Calu3 (cell line): ENCODE measurements at regions of chr20 and their contacts with region 1.

Region 1: DNA sequence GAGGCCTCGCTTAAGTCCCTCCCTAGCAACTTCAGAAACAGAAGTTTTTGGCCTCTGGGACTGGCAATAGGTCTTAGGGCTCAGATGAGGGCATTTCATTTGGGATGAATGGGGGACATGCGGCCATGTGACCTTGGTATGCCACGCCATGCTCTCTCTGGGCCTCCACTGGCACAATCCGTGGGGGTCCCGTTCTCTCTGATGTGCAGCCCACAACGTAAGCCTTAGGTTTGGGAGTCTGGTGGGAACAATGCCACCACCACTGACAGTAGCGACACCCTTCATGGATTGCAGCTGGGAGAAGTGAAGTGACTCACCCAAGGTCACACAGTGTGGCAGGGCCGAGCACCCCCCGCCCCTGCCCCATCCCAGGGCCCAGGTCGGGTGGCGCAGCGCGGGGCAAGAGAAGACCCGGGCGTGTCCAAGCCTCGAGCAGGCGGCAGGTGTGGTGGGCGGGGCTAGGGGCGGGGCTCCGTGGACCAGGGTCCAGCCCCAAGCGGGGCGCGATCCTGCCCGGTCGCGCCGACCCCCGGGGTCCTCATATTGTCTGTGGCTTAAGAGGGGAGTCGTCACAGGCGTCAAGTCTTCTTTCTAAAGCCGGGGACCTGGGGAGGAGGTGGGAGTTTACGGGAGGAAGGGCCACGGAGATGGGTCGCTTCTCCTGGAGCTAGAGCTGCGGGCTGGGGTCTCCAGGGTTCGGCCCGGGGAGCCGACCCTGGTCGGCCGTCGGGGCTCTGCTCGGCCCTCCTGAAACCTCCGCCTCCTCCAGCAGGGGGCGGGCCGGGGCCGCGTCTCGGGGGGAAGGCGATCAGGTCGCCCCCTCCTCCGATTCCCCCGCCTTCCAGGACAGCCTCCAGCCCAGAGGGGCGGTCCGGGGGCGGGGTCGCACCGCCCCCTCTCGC is 698 bp upstream of the CEBPB start:
- DNase-seq: peak; percentile 99
- H3K4me3 Mint-ChIP-seq: peak overlapping the region; percentile 93
- H3K27ac Mint-ChIP-seq: peak overlapping the region; percentile 99
- H3K4me1 Mint-ChIP-seq: peaks cover 41% of the 10 kb centered on the region
- H3K27me3 Mint-ChIP-seq: no peaks in the 10 kb centered on the region
- CTCF ChIP-seq: peak; percentile 90

Region 2: DNA sequence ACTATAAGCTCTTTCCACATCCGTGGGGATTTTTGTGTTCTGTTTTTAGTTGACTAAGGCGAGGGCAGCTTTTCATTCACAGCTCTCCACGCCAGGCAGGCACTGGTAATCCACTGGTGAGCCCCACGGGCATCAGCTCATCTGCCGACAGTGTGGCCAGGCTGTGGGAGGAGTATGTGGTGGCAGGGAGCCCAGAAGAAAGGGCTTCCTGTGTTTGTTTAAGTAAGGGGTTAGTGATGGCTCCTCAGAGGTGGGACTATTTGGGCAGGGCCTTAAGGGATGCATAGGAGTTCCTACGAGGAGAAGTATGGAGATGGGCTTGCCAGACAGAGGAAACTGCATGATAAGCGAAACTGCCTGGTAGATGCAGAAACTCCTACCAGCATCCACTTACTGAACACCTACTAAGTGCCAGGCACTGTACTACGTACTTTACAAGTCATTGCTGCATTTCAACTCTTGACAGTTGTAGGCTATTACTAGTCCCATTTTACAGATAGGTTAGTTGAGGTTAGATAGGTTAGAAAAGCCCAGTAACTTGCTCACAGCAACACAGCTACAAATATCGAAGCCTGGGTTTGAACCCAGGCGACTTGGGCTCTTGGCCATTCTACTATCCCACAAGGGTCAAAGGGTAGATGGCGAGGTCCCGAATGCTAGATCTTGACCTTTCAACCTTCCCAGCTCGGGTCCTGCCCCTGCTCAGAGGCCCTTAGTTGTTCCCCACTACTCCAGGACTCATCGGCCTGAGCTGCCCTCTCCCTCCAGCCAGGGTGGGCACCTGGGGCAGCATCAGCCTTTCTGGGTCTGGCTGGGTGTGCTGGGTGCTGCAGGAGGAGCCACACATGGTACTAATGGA is 55.8 kb after region 1 on chr20:
- CTCF ChIA-PET with region 1: interaction called, 3 read pairs
- intact Hi-C with region 1: loop called (anchors 5 kb)
- DNase-seq: peak; percentile 63
- H3K4me3 Mint-ChIP-seq: peak overlapping the region; percentile 47
- H3K27ac Mint-ChIP-seq: peak overlapping the region; percentile 93
- H3K4me1 Mint-ChIP-seq: peaks cover 88% of the 10 kb centered on the region
- H3K27me3 Mint-ChIP-seq: no peaks in the 10 kb centered on the region
- CTCF ChIP-seq: no peak

Region 3: DNA sequence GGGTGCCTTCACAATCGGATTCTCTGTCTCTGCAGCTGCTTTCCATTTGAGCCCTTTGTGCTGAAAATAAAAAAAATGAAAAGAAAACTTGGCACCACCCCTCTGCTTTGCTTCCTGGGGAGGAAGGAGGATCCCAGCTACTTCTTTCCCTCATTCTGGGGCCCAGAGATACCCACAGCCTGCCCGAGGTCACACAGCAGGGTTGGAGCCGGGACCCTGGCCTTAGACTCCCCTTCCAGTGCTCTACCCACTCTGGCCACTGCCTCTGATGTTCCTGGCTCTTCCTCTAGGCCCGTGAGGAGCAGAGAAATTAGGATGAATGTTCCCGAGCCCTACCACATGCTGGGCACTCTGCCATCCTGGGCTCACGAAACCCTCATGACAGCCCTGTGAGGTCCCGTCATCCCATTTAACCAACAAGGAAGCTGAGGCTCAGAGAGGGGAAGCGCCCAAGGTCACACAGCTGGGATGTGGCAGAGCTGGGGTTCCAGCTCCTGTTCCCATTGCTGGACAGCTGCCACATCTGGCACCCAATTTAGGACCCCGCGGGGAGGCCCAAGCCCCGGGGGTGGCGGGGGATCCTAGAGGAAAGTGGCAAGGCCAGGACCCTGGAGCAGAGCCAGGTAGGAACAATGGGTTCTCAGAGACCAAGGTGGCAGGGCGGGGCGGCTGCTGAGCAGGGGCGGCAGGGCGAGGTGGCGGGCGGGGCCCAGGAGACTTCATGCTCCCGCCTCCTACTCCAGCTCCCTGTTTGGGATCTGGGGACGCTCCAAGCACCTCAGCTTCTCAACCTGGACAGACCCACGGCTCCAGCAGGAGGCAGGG is 77.3 kb after region 1 on chr20:
- CTCF ChIA-PET with region 1: interaction called, 6 read pairs
- intact Hi-C with region 1: loop called (anchors 1 kb)
- DNase-seq: peak; percentile 99
- H3K4me3 Mint-ChIP-seq: peak overlapping the region; percentile 17
- H3K27ac Mint-ChIP-seq: peak overlapping the region; percentile 85
- H3K4me1 Mint-ChIP-seq: peaks cover 51% of the 10 kb centered on the region
- H3K27me3 Mint-ChIP-seq: no peaks in the 10 kb centered on the region
- CTCF ChIP-seq: no peak

Region 4: DNA sequence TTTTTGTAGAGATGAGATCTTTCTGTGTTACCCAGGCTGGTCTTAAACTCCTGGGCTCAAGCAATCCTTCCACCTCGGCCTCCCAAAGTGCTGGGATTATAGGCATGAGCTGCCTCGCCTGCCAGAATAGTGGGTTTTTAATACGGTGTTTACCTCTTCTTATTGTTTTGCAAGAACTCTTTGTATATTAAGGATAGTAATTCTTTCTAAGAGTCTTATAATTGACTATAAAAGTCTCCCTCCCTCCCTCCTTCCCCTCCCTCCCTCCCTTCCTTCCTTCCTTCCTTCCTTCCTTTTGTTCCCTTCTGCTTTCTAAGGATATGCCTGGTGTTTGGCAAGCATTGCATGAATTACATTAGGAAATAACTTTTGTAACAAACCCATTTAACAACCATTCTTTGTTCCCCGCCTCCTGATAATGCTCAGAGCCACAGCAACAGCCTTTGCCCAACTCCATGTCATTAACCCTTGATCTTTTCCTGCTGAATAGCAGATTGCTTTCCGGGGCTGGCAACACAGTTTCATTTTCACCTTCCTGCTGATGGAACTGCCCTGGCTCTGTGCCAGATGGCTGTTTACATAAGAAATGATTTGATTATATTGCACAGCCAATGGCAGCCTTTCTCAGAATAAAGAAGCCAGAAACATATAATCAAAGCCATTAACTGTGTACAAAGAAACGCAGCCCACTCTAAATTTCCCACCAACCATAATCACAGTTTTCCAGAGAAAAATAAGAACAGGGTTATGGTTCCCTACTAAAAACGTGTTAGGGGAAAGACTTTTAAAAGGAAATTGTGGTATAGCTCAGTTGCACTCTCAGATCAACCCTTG is 176.6 kb after region 1 on chr20:
- CTCF ChIA-PET with region 1: no interaction called
- intact Hi-C with region 1: loop called (anchors 10 kb)
- DNase-seq: peak; percentile 93
- H3K4me3 Mint-ChIP-seq: peak overlapping the region; percentile 0
- H3K27ac Mint-ChIP-seq: peak overlapping the region; percentile 15
- H3K4me1 Mint-ChIP-seq: peaks cover 40% of the 10 kb centered on the region
- H3K27me3 Mint-ChIP-seq: no peaks in the 10 kb centered on the region
- CTCF ChIP-seq: no peak

Region 5: DNA sequence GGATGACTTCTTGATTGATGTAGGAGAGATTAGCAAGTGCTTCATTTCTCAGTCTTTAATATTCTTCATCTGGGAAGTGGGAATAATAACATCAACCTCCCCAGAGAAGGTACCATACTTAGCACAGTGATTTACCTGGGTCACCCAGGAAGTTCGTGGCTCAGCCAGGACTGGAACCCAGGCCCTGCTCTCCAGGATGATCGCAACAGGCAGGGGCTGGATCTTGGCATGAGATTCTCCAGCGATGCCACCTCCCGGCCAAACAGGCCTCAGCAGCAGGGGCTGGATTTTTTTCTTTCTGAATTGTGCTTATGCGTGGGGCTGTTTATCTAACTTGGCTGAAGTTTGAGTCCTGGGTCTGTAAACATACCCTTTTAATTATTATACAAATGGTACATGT is 190.7 kb after region 1 on chr20:
- CTCF ChIA-PET with region 1: interaction called, 12 read pairs
- intact Hi-C with region 1: loop called (anchors 5 kb)
- DNase-seq: peak; percentile 60
- H3K4me3 Mint-ChIP-seq: no peak overlapping the region
- H3K27ac Mint-ChIP-seq: no peak overlapping the region
- H3K4me1 Mint-ChIP-seq: peaks cover 76% of the 10 kb centered on the region
- H3K27me3 Mint-ChIP-seq: no peaks in the 10 kb centered on the region
- CTCF ChIP-seq: peak; percentile 58

Region 6: DNA sequence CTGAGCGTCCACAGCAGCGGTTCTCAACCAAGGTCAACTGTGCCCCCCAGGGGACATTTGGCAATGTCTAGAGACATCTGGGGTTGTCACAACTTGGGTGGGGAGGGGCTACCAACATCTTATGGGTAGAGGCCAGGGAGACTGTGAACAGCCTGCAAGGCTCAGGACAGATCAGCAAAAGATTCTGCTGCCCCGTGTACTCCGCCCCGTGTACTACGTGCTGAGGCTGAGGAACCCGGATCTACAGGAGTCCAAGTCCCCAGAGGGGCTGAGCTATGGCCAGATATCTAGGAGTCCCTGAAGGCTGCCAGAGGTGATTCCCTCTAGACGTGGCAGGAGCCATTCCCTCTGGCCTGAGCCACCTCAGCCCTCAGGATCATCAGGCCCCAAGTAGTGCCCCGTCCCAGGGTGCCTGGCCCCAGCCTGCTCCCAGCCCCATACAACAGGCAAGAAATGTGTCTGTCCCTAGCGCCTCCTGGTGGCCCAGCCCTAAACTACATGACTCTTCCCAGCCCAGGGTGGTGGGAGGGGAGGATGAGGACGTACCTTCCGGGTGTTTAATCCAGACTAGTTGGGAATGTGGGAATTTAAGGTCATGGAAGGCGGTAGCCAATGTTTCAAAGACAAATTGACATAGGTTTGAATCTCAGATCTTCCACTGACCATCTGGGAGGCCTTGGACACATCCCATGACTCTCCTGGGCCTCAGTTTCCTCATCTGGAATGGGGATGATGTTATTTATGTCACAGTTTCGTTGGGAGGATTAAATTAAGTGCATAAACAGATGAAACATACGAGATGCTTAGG is 270.7 kb after region 1 on chr20:
- CTCF ChIA-PET with region 1: interaction called, 13 read pairs
- intact Hi-C with region 1: loop called (anchors 1 kb)
- DNase-seq: peak; percentile 96
- H3K4me3 Mint-ChIP-seq: no peak overlapping the region
- H3K27ac Mint-ChIP-seq: peak overlapping the region; percentile 60
- H3K4me1 Mint-ChIP-seq: peaks cover 13% of the 10 kb centered on the region
- H3K27me3 Mint-ChIP-seq: no peaks in the 10 kb centered on the region
- CTCF ChIP-seq: peak; percentile 99

Region 7: DNA sequence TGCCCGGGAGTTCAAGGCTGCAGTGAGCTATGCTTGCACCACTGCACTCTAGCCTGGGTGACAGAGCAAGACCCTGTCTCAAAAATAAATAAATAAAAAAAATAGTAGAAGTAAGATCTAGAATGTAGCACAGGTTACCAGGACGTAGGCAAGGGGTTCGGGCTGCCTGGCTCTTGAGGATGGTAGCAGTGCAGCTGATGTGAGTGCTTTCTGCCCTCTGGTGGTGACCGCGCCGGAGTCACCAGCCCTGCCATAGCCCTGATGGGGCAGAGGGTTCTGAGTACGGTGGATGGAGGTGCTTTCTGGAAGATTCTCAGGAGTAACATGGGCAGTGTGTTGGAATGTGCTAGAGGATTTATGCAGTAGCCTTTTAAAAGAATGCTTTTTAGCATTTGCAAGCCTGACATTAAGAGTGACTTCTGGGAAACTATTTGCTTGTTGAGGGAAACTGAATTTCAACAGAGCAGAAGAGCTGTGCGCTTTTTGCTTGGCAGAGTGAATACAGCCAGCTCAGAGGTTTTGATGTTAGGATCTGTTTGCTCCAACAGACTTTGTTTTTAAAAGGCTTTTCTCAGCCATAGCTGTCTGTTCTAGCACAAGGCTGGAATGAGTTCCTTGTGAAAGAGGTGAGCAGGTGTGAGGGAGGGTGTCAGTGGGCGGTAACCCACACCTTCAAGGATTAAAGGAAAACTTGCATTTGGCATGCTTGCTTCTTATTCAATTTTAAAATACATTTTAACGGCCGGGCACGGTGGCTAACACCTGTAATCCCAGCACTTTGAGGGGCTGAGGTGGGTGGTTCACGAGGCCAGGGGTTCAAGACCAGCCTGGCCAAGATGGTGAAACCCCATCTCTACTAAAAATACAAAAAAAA is 386.2 kb after region 1 on chr20:
- CTCF ChIA-PET with region 1: interaction called, 3 read pairs
- intact Hi-C with region 1: loop called (anchors 1 kb)
- DNase-seq: peak; percentile 86
- H3K4me3 Mint-ChIP-seq: no peak overlapping the region
- H3K27ac Mint-ChIP-seq: no peak overlapping the region
- H3K4me1 Mint-ChIP-seq: peaks cover 19% of the 10 kb centered on the region
- H3K27me3 Mint-ChIP-seq: no peaks in the 10 kb centered on the region
- CTCF ChIP-seq: peak; percentile 92